ENCODE measurements at regions of chr9 and their contacts with region 1.

Region 1: GRCh38 chr9:35814841-35815543 is at the start of gene HINT2:
- DNase-seq: peak; percentile 97
- H3K4me3 Mint-ChIP-seq: peak within 1 kb of the TSS; percentile 91
- H3K27ac Mint-ChIP-seq: peak within 1 kb of the TSS; percentile 96
- H3K4me1 Mint-ChIP-seq: peaks cover 31% of the 10 kb centered on the region
- H3K27me3 Mint-ChIP-seq: peaks cover 6% of the 10 kb centered on the region
- total RNA-seq, gene HINT2: 47.5 and 55.3 TPM in 2 replicates

Region 2: GRCh38 chr9:35111001-35111933 is 703.7 kb before region 1 on chr9:
- intact Hi-C with region 1: loop called (anchors 5 kb)
- DNase-seq: peak; percentile 94
- H3K4me3 Mint-ChIP-seq: peak overlapping the region; percentile 77
- H3K27ac Mint-ChIP-seq: peak overlapping the region; percentile 90
- H3K4me1 Mint-ChIP-seq: peaks cover 61% of the 10 kb centered on the region
- H3K27me3 Mint-ChIP-seq: no peaks in the 10 kb centered on the region

Region 3: GRCh38 chr9:35646533-35647265 is 168.3 kb before region 1 on chr9:
- intact Hi-C with region 1: loop called (anchors 2 kb)
- DNase-seq: peak; percentile 91
- H3K4me3 Mint-ChIP-seq: peak overlapping the region; percentile 92
- H3K27ac Mint-ChIP-seq: peak overlapping the region; percentile 93
- H3K4me1 Mint-ChIP-seq: peaks cover 49% of the 10 kb centered on the region
- H3K27me3 Mint-ChIP-seq: peaks cover 1% of the 10 kb centered on the region

Region 4: DNA sequence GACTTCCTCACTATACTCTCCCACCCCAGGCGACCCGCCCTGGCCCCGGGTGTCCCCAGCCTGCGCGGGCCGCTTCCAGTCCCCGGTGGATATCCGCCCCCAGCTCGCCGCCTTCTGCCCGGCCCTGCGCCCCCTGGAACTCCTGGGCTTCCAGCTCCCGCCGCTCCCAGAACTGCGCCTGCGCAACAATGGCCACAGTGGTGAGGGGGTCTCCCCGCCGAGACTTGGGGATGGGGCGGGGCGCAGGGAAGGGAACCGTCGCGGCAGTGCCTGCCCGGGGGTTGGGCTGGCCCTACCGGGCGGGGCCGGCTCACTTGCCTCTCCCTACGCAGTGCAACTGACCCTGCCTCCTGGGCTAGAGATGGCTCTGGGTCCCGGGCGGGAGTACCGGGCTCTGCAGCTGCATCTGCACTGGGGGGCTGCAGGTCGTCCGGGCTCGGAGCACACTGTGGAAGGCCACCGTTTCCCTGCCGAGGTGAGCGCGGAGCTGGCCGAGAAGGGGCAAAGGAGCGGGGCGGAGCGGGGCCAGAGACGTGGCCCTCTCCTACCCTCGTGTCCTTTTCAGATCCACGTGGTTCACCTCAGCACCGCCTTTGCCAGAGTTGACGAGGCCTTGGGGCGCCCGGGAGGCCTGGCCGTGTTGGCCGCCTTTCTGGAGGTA is 139.1 kb before region 1 on chr9:
- intact Hi-C with region 1: no loop called
- DNase-seq: no peak
- H3K4me3 Mint-ChIP-seq: peak overlapping the region; percentile 20
- H3K27ac Mint-ChIP-seq: no peak overlapping the region
- H3K4me1 Mint-ChIP-seq: peaks cover 5% of the 10 kb centered on the region
- H3K27me3 Mint-ChIP-seq: peaks cover 29% of the 10 kb centered on the region

Region 5: GRCh38 chr9:35748858-35749514 is 66.0 kb before region 1 on chr9 and contains the starts of genes GBA2 and RGP1:
- intact Hi-C with region 1: loop called (anchors 1 kb)
- DNase-seq: peak; percentile 69
- H3K4me3 Mint-ChIP-seq: peak within 1 kb of the TSS; percentile 95
- H3K27ac Mint-ChIP-seq: peak within 1 kb of the TSS; percentile 73
- H3K4me1 Mint-ChIP-seq: peaks cover 40% of the 10 kb centered on the region
- H3K27me3 Mint-ChIP-seq: no peaks in the 10 kb centered on the region
- total RNA-seq, gene GBA2: 54.7 and 58.4 TPM in 2 replicates
- total RNA-seq, gene RGP1: 18.4 and 18.9 TPM in 2 replicates

Region 6: GRCh38 chr9:35798658-35799374 is 16.2 kb before region 1 on chr9:
- intact Hi-C with region 1: loop called (anchors 1 kb)
- DNase-seq: no peak
- H3K4me3 Mint-ChIP-seq: no peak overlapping the region
- H3K27ac Mint-ChIP-seq: peak overlapping the region; percentile 68
- H3K4me1 Mint-ChIP-seq: peaks cover 30% of the 10 kb centered on the region
- H3K27me3 Mint-ChIP-seq: no peaks in the 10 kb centered on the region

Region 7: DNA sequence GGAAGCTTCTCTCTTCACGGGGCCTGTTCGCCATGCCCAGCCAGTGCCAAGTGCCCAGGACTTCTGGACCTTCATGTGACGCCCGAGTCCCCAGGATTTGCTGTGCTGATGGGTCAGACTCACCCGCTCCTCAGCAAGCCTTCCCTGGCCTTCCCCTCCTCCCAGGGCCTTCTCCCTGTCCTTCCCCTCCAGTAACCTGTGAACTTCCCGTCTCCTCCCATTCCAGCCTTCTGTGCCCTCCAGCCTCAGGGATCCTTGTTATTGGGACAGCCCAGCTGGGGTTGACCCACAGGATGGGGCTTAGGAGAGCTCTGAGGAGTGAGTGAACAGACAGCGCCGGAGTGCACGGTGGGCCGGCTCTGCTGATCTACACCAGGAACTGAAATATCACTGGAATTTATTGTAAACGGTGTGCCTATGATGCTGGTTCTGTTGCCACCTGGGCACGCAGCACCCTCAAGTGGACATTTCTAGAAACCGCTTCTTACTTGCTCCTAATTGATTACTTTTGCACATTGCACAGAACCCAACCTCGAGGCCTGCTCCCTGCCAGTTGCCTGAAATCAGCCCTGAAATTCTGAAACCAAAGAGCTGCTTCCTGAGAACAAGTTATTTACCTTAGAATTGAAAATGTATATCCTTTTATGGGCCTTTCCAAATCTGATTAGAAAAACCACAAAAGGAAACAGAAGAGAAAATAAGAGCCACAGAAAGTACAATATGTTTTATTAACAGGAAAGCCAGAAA is 95.8 kb after region 1 on chr9:
- intact Hi-C with region 1: loop called (anchors 1 kb)
- DNase-seq: peak; percentile 28
- H3K4me3 Mint-ChIP-seq: peak overlapping the region; percentile 57
- H3K27ac Mint-ChIP-seq: peak overlapping the region; percentile 69
- H3K4me1 Mint-ChIP-seq: peaks cover 32% of the 10 kb centered on the region
- H3K27me3 Mint-ChIP-seq: peaks cover 2% of the 10 kb centered on the region

Region 8: DNA sequence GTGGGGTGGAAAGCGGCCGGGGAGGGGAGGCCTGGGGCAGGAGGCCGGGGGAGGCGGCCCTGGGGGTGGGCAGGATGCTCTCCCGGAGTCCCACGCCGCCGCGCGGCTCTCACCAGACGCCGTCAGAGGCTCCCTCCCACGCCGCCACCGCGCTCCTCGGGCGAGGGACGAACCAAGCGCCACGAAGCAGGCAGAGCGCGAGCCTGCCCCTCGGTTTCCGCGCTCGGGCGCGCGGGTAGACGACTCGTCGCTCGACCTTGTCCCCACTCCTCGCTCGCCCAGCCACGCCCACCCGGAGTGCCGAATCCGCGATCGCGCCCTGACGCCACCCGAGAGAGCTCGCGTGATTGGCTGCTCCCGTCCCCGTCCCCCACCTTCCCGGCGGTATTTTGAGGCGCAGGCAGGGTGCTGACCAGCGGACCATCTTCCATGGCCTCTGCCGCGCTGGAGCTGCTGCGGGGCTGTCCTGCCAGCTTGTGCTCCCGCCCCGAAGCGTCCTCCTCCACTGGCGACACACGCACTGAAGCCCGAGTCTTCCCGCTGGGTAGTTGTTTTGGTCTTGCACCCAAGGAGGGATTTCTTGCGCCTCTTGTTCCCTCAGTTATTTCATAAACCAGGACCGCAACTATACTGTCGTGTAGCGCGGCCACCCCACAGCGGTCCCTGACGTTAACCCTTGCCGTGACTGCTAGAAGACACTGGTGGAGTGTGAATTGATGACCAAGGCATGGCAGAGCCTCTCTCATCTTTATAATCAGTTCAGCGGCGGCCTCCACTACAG is 443.4 kb after region 1 on chr9 and contains the start of gene GNE:
- intact Hi-C with region 1: loop called (anchors 10 kb)
- DNase-seq: peak; percentile 98
- H3K4me3 Mint-ChIP-seq: peak within 1 kb of the TSS; percentile 96
- H3K27ac Mint-ChIP-seq: peak within 1 kb of the TSS; percentile 96
- H3K4me1 Mint-ChIP-seq: peaks cover 15% of the 10 kb centered on the region
- H3K27me3 Mint-ChIP-seq: no peaks in the 10 kb centered on the region
- total RNA-seq, gene GNE: 21.7 and 22.7 TPM in 2 replicates

Region 9: DNA sequence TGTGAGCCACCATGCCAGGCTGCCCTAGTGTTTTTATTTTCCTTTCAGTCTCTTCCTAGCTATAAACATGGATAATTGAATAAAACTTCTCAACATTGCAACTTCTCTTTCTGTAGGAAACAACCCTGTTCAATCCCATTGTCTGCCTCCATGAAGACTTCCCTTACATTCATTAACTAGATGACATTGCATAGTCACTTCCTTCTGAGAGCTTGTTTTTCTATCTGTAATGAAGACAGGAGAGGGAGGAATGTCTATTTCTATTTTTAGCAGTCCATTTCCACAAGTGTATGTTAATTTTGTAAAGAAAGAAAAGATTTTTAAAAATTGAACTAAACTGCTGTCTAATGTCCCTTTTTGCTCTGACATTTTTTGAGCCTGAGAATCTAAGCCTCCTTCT is 702.1 kb after region 1 on chr9:
- intact Hi-C with region 1: no loop called
- DNase-seq: no peak
- H3K4me3 Mint-ChIP-seq: no peak overlapping the region
- H3K27ac Mint-ChIP-seq: no peak overlapping the region
- H3K4me1 Mint-ChIP-seq: no peaks in the 10 kb centered on the region
- H3K27me3 Mint-ChIP-seq: peaks cover 8% of the 10 kb centered on the region

Measured in activated T-helper 1 cell treated with anti-CD3 and anti-CD28 coated beads, Interleukin-12 subunit alpha, Interleukin-12 subunit beta, Interleukin-2, Interleukin-4 antibody, amounts not matched to agents 30 ng/mL and 10 ng/mL and 1 ng/mL, durations not matched to agents 14 hours and 24 hours and 36 hours (primary cell).